AG04450 (cell line): ENCODE measurements at regions of chr16 and their contacts with region 1.

Region 1: DNA sequence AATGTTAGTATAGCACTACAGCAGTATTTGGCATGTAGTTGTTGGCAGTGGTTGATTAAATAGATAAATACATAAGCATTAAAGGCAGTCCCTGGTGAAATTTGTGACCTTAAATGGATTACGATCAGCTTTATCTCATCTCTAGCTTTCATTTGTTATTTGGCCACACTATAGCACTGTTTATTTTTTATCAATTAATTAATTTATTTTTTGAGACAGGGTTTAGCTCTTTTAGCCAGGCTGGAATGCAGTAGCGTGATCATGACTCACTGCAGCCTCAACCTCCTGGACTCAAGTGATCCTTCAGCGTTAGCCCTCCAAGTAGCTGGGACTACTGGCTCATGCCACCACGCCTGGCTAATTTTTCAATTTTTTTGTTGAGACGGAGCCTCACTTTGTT is 18.7 kb upstream of the ARHGAP17 start:
- DNase-seq: no peak
- H3K4me3 ChIP-seq: no peak overlapping the region
- H3K27ac ChIP-seq: peak overlapping the region; percentile 75
- H3K27me3 ChIP-seq: no peaks in the 10 kb centered on the region
- CTCF ChIP-seq: no peak

Region 2: GRCh38 chr16:24841291-24841690 is 192.6 kb before region 1 on chr16:
- CTCF ChIA-PET with region 1: no interaction called
- POLR2A ChIA-PET with region 1: no interaction called
- DNase-seq: no peak
- H3K4me3 ChIP-seq: no peak overlapping the region
- H3K27ac ChIP-seq: no peak overlapping the region
- H3K27me3 ChIP-seq: no peaks in the 10 kb centered on the region
- CTCF ChIP-seq: no peak

Region 3: DNA sequence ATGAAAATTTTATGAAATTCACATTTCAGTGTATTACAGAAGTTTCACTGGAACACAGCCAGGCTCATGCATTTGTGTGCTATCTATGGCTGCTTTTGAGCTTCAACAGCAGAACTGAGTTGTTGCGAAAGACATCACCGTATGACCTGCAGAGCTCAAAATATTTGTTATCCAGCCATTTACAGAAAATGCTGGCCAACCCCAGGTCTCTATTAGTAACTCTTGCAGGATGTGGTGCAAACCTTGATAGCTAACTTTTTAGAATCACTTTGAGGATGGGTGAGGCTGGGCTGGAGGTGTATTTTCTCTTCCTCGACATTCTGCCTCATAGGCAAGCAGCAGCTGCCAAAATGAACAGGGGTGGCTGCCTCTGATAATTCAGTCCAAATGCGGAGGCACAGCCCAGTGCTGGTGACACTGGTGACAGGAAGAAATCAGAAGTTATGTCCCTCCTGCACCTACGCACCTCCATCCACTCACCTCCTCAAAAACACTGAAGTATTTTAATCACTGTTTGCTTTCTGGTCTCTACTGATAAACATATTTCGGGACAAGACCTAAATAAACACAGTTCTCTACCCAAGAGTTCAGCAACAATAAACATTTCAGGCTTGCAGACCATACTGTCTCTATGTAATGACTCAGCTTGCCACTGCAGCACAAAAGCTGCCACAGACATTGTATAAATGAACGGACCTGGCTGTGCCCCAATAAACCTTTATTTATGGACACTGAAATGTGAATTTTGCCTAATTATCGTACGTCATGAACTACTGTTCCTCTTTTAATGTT is 47.1 kb before region 1 on chr16:
- CTCF ChIA-PET with region 1: no interaction called
- POLR2A ChIA-PET with region 1: interaction called, 19 read pairs
- DNase-seq: no peak
- H3K4me3 ChIP-seq: peak overlapping the region; percentile 37
- H3K27ac ChIP-seq: peak overlapping the region; percentile 98
- H3K27me3 ChIP-seq: no peaks in the 10 kb centered on the region
- CTCF ChIP-seq: no peak

Region 4: DNA sequence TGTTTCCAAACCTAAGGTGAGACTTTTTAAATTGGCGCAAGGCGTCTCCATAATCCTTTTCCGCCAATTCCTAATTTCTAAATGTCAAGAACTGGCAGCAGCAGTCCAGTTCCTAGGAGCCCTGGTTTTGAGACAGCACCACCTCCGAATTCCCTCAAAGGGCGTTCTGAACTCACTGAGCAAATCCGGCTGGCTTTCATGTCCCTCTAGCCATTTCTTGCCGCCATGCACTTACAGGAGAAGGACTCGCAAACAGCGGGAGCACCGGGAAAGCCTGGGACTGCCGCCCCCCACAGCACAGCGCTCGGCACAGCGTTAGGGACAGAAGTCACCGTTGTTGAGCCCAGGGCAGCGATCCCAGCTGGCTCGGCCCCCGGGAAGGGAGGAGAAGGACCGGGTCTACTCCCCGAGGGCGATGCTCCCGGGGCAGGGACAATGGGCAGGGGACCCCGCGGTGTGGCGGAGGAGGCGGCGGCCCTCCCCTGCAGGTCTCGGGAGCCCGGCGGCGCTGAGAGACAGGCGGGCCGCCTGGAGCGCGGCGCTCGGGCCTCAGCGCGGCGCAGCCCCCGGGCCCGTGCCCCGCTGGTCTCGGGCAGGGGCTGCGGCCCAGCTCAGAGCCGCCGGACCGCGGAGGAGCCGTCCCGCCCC is 19.2 kb before region 1 on chr16:
- CTCF ChIA-PET with region 1: no interaction called
- POLR2A ChIA-PET with region 1: interaction called, 13 read pairs
- DNase-seq: no peak
- H3K4me3 ChIP-seq: peak overlapping the region; percentile 89
- H3K27ac ChIP-seq: peak overlapping the region; percentile 70
- H3K27me3 ChIP-seq: no peaks in the 10 kb centered on the region
- CTCF ChIP-seq: no peak

Region 5: DNA sequence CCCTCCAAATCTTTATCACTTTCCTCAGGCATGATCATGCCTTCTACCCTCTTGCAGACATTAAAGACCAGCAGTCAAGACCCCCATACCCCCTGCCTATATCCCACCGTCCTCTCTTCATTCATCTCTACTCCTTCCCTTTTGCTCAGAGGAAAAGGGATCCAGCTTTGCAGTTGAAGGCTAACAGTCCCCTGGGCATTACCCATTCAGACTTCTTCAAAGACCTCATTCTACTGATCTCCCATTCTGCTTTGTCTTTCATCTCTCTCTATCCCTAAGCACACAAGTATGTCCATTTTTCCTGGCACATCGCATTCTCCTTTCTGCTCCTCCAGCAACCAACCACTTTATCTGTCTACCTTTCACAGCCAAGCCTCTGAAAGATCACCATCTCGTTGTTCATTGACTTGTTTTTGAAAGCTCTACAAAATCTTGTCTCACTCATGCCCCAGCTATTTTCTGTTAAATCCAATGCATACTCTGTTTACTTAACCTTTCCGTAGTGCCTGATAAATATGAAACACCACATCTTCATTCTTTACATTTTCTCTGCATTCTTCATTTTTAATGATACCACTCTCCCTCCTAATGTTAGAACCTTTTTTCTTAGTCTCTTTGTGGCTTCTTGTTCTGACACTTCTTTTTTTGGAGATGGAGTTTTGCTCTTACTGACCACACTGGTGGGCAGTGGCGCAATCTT is 63.6 kb after region 1 on chr16:
- CTCF ChIA-PET with region 1: no interaction called
- POLR2A ChIA-PET with region 1: interaction called, 11 read pairs
- DNase-seq: peak; percentile 41
- H3K4me3 ChIP-seq: no peak overlapping the region
- H3K27ac ChIP-seq: peak overlapping the region; percentile 39
- H3K27me3 ChIP-seq: no peaks in the 10 kb centered on the region
- CTCF ChIP-seq: no peak